Activated CD4-positive, alpha-beta T cell treated with anti-CD3 and anti-CD28 coated beads, Interleukin-2, amount 10 ng/mL, durations not matched to agents 7 days and 5 days (primary cell): ENCODE measurements at regions of chr1 and their contacts with region 1.

Region 1: GRCh38 chr1:205255941-205256780 is 28.4 kb downstream of the TMCC2 start:
- DNase-seq: peak; percentile 88
- H3K4me3 Mint-ChIP-seq: no peak overlapping the region
- H3K27ac Mint-ChIP-seq: no peak overlapping the region
- H3K4me1 Mint-ChIP-seq: no peaks in the 10 kb centered on the region
- H3K27me3 Mint-ChIP-seq: no peaks in the 10 kb centered on the region

Region 2: GRCh38 chr1:204989266-204990058 is 266.7 kb before region 1 on chr1:
- CTCF ChIA-PET with region 1: interaction called, 17 read pairs
- POLR2A ChIA-PET with region 1: no interaction called
- DNase-seq: peak; percentile 63
- H3K4me3 Mint-ChIP-seq: no peak overlapping the region
- H3K27ac Mint-ChIP-seq: no peak overlapping the region
- H3K4me1 Mint-ChIP-seq: peaks cover 18% of the 10 kb centered on the region
- H3K27me3 Mint-ChIP-seq: peaks cover 4% of the 10 kb centered on the region

Region 3: DNA sequence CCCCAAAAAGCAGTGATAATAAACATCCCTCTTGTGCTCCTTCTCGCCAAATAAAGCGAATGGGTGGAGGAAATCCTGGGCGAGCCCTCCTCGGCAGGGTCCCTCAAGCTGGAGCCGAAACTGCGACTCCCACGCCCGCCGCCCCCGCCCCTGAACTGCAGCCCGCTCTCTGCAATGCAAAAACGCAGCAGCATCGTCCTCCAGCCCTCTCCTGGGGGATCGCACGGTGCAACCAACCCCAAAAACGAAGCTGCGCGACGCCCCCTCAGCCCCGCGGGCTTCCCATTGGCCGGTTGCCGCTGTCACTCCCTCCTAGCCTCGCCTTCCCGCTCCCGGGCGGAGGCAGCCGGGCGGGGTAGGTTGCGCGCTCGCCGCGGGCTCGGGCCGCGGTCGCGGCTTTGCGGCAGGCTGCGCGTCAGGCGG is 28.6 kb before region 1 on chr1 and contains the start of gene TMCC2:
- CTCF ChIA-PET with region 1: interaction called, 103 read pairs
- POLR2A ChIA-PET with region 1: no interaction called
- DNase-seq: peak; percentile 79
- H3K4me3 Mint-ChIP-seq: peak within 1 kb of the TSS; percentile 76
- H3K27ac Mint-ChIP-seq: peak within 1 kb of the TSS; percentile 64
- H3K4me1 Mint-ChIP-seq: peaks cover 42% of the 10 kb centered on the region
- H3K27me3 Mint-ChIP-seq: peaks cover 43% of the 10 kb centered on the region
- total RNA-seq, gene TMCC2: 0.52 to 0.64 TPM

Region 4: GRCh38 chr1:205237526-205238484 is 18.4 kb before region 1 on chr1:
- CTCF ChIA-PET with region 1: interaction called, 70 read pairs
- POLR2A ChIA-PET with region 1: no interaction called
- DNase-seq: no peak
- H3K4me3 Mint-ChIP-seq: no peak overlapping the region
- H3K27ac Mint-ChIP-seq: no peak overlapping the region
- H3K4me1 Mint-ChIP-seq: peaks cover 12% of the 10 kb centered on the region
- H3K27me3 Mint-ChIP-seq: no peaks in the 10 kb centered on the region

Region 5: DNA sequence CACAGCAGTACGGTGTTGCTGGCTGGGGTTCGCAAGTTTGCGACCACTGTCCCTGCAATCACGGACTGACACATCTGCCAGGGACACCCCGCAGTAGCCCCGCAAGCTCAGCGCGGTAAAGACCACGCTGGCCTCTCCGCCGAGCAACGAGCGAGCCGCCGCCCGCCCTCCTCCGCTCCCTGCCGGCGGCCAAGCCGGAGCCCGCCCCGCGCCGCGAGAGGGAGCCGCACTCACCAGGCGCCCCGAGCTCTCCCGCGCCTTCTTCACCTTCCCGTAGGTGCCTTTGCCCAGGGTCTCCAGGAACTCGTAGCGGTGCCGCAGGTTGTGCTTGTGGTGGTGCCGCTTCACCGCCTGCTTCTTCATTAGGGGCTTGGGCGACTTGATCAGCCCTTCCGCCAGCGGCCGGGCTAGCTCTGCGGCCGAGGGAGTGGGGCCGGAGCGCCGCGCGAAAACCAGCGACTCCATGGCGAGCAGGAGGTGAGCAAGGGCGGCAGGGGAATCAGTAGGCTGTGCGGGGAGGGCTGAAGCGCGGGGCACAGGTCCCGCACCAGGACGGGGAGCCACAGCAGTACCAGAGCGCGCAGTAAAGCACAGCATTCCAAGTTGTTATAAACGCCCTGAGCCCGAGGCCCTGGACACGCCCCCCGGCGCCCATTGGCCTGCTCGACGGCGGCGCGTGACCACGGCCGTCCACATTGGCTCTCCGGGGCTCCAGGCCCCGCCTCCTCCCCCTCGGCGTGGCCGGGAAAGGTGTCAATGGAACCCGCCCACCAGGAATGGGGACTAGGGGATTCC is 65.2 kb after region 1 on chr1 and contains the start of gene NUAK2:
- CTCF ChIA-PET with region 1: interaction called, 12 read pairs
- POLR2A ChIA-PET with region 1: no interaction called
- DNase-seq: peak; percentile 81
- H3K4me3 Mint-ChIP-seq: peak within 1 kb of the TSS; percentile 98
- H3K27ac Mint-ChIP-seq: peak within 1 kb of the TSS; percentile 90
- H3K4me1 Mint-ChIP-seq: peaks cover 65% of the 10 kb centered on the region
- H3K27me3 Mint-ChIP-seq: peaks cover 6% of the 10 kb centered on the region
- total RNA-seq, gene NUAK2: 12.1 to 12.7 TPM

Region 6: DNA sequence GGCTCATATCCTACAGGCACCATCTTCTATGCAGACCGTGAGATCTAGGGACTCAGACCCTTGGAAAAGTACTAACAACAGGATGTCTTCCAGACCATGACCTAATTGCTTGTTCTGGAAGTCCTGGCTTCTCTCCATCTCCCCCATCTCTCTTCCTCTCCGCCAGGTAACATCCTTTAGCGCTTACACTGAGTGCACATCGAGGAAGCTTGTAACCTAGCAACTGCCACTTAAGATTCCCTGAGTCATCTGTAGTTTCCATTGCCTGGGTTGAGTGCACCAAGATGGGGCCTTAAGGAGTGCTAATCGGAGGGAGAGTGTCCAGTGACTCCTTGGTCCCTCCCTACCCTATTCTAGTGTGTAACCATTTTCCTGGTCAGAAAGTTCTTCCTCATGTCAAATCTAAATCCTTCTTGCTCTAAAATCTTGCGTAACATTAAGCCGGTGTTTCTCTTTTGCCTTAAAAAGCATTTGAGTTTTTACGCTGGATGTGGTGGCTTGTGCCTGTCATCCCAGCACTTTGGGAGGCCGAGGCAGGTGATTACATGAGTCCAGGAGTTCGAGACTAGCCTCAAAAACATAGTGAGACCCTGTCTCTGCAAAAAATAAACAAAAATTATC is 90.9 kb after region 1 on chr1:
- CTCF ChIA-PET with region 1: no interaction called
- POLR2A ChIA-PET with region 1: no interaction called
- DNase-seq: no peak
- H3K4me3 Mint-ChIP-seq: no peak overlapping the region
- H3K27ac Mint-ChIP-seq: no peak overlapping the region
- H3K4me1 Mint-ChIP-seq: peaks cover 6% of the 10 kb centered on the region
- H3K27me3 Mint-ChIP-seq: peaks cover 49% of the 10 kb centered on the region